ENCODE measurements at regions of chr20 and their contacts with region 1.

Region 1: DNA sequence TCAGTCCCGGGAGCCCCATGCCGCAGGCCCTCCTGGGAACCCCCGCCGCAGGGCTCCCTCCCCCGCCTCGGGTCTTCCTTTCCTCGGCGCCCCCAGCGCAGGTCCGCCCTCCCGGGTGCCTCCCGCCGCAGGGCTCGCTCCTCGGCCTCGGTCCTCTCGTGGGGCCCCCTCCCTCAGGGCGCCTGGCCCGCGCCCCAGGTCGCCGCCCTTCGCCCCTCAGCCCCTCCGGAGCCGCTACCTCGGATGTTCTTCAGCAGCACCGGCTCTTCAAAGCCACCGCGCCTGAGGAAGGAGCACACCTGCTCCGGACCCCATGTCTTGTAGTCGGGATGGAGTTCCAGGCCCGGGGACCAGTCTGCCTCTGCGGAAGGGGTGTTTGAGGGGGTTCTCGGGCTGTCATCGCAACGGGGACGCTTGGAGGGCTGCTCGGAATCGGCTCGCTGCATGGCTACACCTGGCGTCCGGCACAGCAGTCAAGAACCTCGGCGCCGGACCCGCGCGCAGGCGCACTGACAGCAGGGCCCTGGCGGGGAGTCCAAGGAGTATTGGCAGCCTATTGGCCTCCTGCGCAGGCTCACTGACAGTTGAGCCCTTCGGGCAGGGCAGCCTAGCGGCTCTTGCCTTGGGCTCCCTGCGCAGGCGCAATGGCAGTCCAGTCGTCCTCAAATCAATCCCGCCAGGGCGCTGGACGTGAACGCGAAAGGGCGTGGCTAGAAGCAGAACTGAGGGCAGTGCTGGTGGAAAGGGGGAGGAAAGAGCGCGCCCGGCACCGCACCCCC is at the start of gene SAMHD1:
- DNase-seq: peak; percentile 95
- H3K4me3 Mint-ChIP-seq: peak within 1 kb of the TSS; percentile 98
- H3K27ac Mint-ChIP-seq: peak within 1 kb of the TSS; percentile 92
- H3K4me1 Mint-ChIP-seq: peaks cover 44% of the 10 kb centered on the region
- H3K27me3 Mint-ChIP-seq: no peaks in the 10 kb centered on the region
- total RNA-seq, gene SAMHD1: 50.4 to 57.7 TPM

Region 2: GRCh38 chr20:36676701-36677421 is 274.5 kb before region 1 on chr20:
- CTCF ChIA-PET with region 1: no interaction called
- POLR2A ChIA-PET with region 1: no interaction called
- intact Hi-C with region 1: no loop called
- DNase-seq: no peak
- H3K4me3 Mint-ChIP-seq: no peak overlapping the region
- H3K27ac Mint-ChIP-seq: no peak overlapping the region
- H3K4me1 Mint-ChIP-seq: no peaks in the 10 kb centered on the region
- H3K27me3 Mint-ChIP-seq: no peaks in the 10 kb centered on the region

Region 3: DNA sequence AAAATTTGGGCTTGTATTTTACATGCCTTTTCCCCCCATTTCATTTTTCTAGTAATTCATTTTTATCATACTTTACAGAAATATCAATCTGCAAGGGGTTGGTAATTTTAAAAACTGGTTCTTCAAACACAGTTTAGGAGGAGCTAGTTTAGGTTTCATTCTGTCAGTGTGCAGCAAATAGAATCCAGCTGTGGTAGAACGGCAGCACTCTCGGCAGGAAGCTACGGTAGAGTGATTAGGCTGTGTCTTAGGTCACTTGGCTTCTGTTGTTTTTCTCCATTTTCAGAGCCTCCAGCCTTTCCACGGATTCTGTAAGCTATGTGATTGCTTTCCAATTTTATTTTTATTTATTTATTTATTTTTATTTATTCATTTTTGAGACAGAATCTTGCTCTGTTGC is 42.8 kb before region 1 on chr20:
- CTCF ChIA-PET with region 1: no interaction called
- POLR2A ChIA-PET with region 1: no interaction called
- intact Hi-C with region 1: no loop called
- DNase-seq: no peak
- H3K4me3 Mint-ChIP-seq: no peak overlapping the region
- H3K27ac Mint-ChIP-seq: no peak overlapping the region
- H3K4me1 Mint-ChIP-seq: peaks cover 8% of the 10 kb centered on the region
- H3K27me3 Mint-ChIP-seq: no peaks in the 10 kb centered on the region

Region 4: DNA sequence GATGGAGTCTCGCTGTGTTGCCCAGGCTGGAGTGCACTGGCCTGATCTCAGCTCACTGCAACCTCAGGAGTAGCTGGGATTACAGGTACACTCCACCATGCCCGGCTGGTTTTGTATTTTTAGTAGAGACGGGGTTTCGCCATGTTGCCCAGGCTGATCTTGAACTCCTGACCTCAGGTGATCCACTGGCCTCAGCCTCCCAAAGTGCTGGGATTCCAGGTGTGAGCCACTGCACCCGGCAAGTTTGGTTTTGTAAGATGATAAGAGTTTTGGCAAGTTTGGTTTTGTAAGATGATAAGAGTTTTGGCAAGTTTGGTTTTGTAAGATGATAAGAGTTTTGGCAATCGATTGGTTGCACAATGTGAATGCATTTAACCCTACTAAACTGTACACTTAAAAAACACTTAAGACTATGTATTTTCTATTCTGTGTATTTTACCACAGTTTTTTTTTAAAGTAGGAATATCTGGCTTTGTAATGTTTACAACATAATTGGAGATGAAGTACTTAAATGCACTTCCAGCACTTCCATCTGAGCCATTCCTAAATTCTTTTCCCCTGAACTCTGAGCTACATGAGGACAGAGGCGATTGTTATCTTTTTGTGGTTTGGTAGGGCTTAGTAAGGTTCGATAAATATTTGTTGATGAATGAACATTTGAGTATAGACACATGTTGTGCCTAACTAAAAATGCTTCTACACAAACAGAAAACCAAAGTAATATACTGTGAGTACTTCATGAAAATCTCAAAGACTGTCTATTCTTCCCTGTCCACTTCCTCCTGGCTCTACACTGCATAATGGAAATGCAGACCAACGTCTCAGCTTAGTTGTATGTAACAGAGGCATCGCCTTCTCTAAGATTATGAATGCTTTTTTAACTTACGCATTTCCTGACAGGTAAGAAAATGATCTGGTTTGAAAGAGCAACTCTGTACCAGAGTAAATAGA is 18.6 kb before region 1 on chr20:
- CTCF ChIA-PET with region 1: interaction called, 3 read pairs
- POLR2A ChIA-PET with region 1: no interaction called
- intact Hi-C with region 1: loop called (anchors 2 kb)
- DNase-seq: no peak
- H3K4me3 Mint-ChIP-seq: no peak overlapping the region
- H3K27ac Mint-ChIP-seq: peak overlapping the region; percentile 72
- H3K4me1 Mint-ChIP-seq: peaks cover 56% of the 10 kb centered on the region
- H3K27me3 Mint-ChIP-seq: no peaks in the 10 kb centered on the region

Region 5: DNA sequence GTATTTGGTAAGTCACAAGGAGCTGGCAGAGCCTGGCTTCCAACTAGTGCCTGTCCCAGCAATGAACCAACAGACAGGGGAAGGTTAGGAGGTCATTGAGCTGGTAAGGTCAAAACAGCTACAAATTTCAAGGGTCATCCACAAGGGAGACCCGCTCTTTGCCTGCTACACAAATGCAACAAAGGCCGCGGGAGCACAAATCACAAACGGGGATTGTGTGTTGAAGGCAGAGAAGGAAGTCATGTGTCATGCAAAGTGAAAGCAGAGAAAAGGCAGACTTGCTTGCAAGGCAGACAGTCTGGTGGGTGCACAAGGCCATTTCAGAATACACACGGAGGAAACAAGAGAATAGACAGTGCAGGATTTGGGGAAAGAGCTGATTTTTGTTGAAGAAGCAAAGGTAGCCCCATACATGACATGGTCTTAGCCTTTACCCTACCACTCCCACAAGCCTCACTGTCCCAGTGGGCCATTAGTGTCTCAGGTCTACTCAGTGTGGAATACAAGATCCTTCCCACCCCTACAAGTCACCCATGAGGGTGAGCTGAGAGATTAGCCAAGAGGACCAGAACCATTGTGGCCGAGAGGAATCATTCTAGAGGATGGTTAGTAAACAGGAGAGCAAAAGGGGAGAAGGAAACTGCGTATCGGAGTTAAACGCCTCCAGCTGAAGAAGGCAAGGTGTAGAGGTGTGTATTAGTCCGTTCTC is 18.2 kb after region 1 on chr20:
- CTCF ChIA-PET with region 1: interaction called, 8 read pairs
- POLR2A ChIA-PET with region 1: no interaction called
- intact Hi-C with region 1: loop called (anchors 2 kb)
- DNase-seq: peak; percentile 55
- H3K4me3 Mint-ChIP-seq: peak overlapping the region; percentile 30
- H3K27ac Mint-ChIP-seq: peak overlapping the region; percentile 80
- H3K4me1 Mint-ChIP-seq: peaks cover 61% of the 10 kb centered on the region
- H3K27me3 Mint-ChIP-seq: no peaks in the 10 kb centered on the region

Region 6: GRCh38 chr20:36975099-36975818 is 23.9 kb after region 1 on chr20:
- CTCF ChIA-PET with region 1: interaction called, 5 read pairs
- POLR2A ChIA-PET with region 1: no interaction called
- intact Hi-C with region 1: loop called (anchors 1 kb)
- DNase-seq: peak; percentile 71
- H3K4me3 Mint-ChIP-seq: no peak overlapping the region
- H3K27ac Mint-ChIP-seq: peak overlapping the region; percentile 19
- H3K4me1 Mint-ChIP-seq: peaks cover 37% of the 10 kb centered on the region
- H3K27me3 Mint-ChIP-seq: no peaks in the 10 kb centered on the region

Region 7: GRCh38 chr20:37011147-37011546 is 59.8 kb after region 1 on chr20:
- CTCF ChIA-PET with region 1: no interaction called
- POLR2A ChIA-PET with region 1: no interaction called
- intact Hi-C with region 1: loop called (anchors 1 kb)
- DNase-seq: no peak
- H3K4me3 Mint-ChIP-seq: no peak overlapping the region
- H3K27ac Mint-ChIP-seq: peak overlapping the region; percentile 28
- H3K4me1 Mint-ChIP-seq: peaks cover 33% of the 10 kb centered on the region
- H3K27me3 Mint-ChIP-seq: no peaks in the 10 kb centered on the region

Region 8: DNA sequence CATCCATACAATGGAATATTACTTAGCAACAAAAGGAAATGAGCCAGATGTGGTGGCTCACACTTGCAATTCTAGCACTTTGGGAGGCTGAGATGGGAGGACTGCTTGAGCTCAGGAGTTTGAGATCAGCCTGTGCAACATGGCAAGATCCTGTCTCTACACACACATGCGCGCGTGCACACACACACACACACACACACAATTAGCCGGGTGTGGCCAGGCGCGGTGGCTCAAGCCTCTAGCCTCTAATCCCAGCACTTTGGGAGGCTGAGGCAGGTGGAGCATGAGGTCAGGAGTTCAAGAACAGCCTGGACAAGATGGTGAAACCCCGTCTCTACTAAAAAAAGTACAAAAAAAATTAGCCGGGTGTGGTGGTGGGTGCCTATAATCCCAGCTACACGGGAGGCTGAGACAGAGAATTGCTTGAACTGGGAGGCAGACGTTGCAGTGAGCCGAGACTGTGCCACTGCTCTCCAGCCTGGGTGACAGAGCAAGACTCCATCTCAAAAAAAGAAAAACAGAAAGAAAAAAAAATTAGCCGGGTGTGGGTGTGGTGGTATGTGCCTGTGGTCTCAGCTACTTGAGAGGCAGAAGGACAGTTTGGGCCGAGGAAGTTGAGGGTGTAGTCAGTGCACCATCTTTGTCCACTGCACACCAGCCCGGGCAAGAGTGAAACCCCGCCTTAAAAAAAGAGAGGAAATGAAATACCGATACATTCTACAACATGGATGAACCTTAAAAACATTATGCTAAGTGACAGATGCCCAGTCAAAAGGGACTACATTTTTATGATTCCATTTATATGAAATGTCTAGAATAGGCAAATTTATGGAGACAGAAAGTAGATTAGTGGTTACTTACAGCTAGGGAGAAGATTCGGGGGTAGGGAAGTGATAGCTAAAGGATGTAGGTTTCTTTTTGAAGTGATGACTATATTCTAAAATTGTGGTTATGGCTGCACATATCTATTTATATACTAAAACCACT is 91.9 kb after region 1 on chr20:
- CTCF ChIA-PET with region 1: no interaction called
- POLR2A ChIA-PET with region 1: no interaction called
- intact Hi-C with region 1: loop called (anchors 2 kb)
- DNase-seq: peak; percentile 40
- H3K4me3 Mint-ChIP-seq: peak overlapping the region; percentile 57
- H3K27ac Mint-ChIP-seq: peak overlapping the region; percentile 73
- H3K4me1 Mint-ChIP-seq: peaks cover 30% of the 10 kb centered on the region
- H3K27me3 Mint-ChIP-seq: no peaks in the 10 kb centered on the region

Region 9: DNA sequence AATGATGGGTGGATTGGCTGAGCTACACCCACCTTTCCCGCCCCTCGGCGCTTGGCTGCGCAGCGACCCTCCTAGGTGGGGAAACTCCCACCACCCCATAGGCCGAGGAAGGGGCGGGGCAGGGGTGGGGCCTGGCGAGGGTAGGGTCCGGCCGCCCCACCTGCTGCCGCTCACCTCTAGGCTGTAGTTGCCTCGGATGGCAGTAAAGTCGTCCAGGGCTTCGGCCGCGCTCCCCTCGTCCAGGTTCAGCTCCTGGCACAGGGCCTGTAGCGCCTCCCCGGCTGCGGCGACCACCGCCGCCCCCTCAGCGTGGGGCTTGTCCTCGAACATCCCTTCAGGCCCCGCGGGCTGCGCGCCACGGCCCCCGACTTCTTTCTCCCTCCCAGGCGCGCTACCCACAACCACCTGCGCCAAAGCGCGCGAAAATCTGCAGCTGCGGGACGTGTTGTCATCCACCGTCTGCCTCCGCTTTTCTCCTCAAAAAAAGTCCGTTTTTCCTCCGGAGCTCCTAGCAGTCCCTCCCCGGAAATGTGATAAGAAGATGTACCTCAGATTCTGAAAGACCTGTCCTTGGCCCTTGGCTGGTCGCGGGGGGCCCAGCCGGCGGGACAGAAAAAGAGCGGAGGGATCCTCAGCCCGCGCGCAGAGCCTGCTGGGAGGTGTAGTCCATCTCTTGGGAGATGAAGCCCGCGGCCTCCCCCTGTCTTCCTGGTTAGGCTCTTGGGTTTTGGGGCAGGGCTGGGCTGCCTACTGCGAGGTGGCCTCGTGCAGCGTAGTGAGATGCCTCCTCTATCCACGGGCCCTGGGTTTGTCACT is 144.4 kb after region 1 on chr20 and contains the start of gene RBL1:
- CTCF ChIA-PET with region 1: no interaction called
- POLR2A ChIA-PET with region 1: interaction called, 5 read pairs
- intact Hi-C with region 1: loop called (anchors 1 kb)
- DNase-seq: peak; percentile 92
- H3K4me3 Mint-ChIP-seq: peak within 1 kb of the TSS; percentile 93
- H3K27ac Mint-ChIP-seq: peak within 1 kb of the TSS; percentile 99
- H3K4me1 Mint-ChIP-seq: peaks cover 33% of the 10 kb centered on the region
- H3K27me3 Mint-ChIP-seq: no peaks in the 10 kb centered on the region
- total RNA-seq, gene RBL1: 41.4 to 41.6 TPM